GM12878 (cell line): ENCODE measurements at regions of chr1 and their contacts with region 1.

Region 1: GRCh38 chr1:174743654-174744561 is 255.8 kb upstream of the CACYBP start:
- DNase-seq: no peak
- ATAC-seq: peak; percentile 39
- H3K4me3 ChIP-seq: no peak overlapping the region
- H3K27ac ChIP-seq: no peak overlapping the region
- H3K4me1 ChIP-seq: peaks cover 9% of the 10 kb centered on the region; the same call in 1 of the 2 replicates
- H3K27me3 ChIP-seq: no peaks in the 10 kb centered on the region
- CTCF ChIP-seq: peak; percentile 36 to 63 (median 41); a peak in 5 of 6 replicates
- EP300 ChIP-seq: no peak
- POLR2A ChIP-seq: no peak
- RAD21 ChIP-seq: peak; percentile 80

Region 2: DNA sequence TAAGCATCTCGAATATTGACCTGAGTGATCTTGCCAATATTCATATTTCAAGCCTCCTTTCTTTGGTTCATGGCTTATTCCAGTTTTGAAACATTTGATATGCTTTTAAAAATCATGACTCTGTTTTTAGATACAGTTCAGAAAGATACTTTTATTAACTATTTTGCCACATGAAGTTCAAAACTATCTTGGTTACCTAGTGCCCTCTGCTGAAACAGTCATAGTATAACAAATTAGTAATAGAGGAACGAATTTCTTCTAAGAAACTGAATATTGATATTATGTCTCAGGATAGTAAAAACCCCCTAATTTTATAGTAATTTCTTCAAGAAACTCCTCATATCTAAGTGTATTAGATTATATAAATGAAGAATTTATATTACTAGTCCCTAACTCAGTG is 669.2 kb before region 1 on chr1:
- CTCF ChIA-PET with region 1: no interaction called
- POLR2A ChIA-PET with region 1: no interaction called
- RAD21 ChIA-PET with region 1: no interaction called
- SMC1A ChIA-PET with region 1: no interaction called
- in situ Hi-C with region 1: loop called (anchors 25 kb)
- intact Hi-C with region 1: no loop called
- DNase-seq: no peak
- ATAC-seq: no peak
- H3K4me3 ChIP-seq: no peak overlapping the region
- H3K27ac ChIP-seq: no peak overlapping the region
- H3K4me1 ChIP-seq: no peaks in the 10 kb centered on the region
- H3K27me3 ChIP-seq: no peaks in the 10 kb centered on the region
- CTCF ChIP-seq: peak in 1 of 3 experiments; percentile 11; a peak in 3 of 6 replicates
- EP300 ChIP-seq: no peak
- POLR2A ChIP-seq: no peak
- RAD21 ChIP-seq: peak; percentile 60

Region 3: DNA sequence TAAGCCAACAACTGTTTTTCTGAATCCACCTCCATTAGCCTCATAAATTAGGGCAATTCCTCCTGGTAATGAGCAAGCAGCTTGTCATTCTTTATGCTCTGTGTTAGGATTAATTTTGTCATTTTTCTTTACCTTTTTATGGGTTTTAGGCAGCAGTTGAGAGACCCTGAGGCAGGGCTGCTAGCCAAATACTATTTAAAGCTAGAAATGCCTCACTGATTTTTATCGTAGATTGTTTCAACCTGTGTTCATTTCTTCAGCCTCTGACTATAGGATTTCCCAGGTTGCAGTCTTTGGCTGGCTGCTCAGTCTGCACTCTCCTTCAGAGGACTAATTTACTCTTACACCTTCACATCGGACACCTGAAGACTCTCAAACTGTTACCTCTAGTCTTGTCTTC is 646.5 kb before region 1 on chr1:
- CTCF ChIA-PET with region 1: no interaction called
- POLR2A ChIA-PET with region 1: no interaction called
- RAD21 ChIA-PET with region 1: no interaction called
- SMC1A ChIA-PET with region 1: no interaction called
- in situ Hi-C with region 1: loop called (anchors 25 kb)
- intact Hi-C with region 1: loop called (anchors 10 kb)
- DNase-seq: no peak
- ATAC-seq: no peak
- H3K4me3 ChIP-seq: no peak overlapping the region
- H3K27ac ChIP-seq: no peak overlapping the region
- H3K4me1 ChIP-seq: no peaks in the 10 kb centered on the region
- H3K27me3 ChIP-seq: no peaks in the 10 kb centered on the region; a peak in 1 of 4 replicates
- CTCF ChIP-seq: no peak
- EP300 ChIP-seq: no peak
- POLR2A ChIP-seq: no peak
- RAD21 ChIP-seq: no peak

Region 4: GRCh38 chr1:174159252-174160108 is 584.4 kb before region 1 on chr1 and contains the start of gene RABGAP1L:
- CTCF ChIA-PET with region 1: no interaction called
- POLR2A ChIA-PET with region 1: no interaction called
- RAD21 ChIA-PET with region 1: no interaction called
- SMC1A ChIA-PET with region 1: no interaction called
- in situ Hi-C with region 1: no loop called
- intact Hi-C with region 1: loop called (anchors 10 kb)
- DNase-seq: peak; percentile 55
- ATAC-seq: peak; percentile 84
- H3K4me3 ChIP-seq: peak within 1 kb of the TSS; percentile 91
- H3K27ac ChIP-seq: peak within 1 kb of the TSS; percentile 93
- H3K4me1 ChIP-seq: peaks cover 31% of the 10 kb centered on the region
- H3K27me3 ChIP-seq: no peaks in the 10 kb centered on the region; a peak in 1 of 4 replicates
- CTCF ChIP-seq: no peak
- EP300 ChIP-seq: no peak
- POLR2A ChIP-seq: peak; percentile 96
- RAD21 ChIP-seq: 0 out of 2 replicates have a peak, but pooled peaks have one; percentile 6
- polyA plus RNA-seq, gene RABGAP1L: 92.3 to 130 TPM

Region 5: GRCh38 chr1:174262349-174263241 is 481.3 kb before region 1 on chr1:
- CTCF ChIA-PET with region 1: interaction called, 91 read pairs
- POLR2A ChIA-PET with region 1: no interaction called
- RAD21 ChIA-PET with region 1: interaction called, 48 read pairs
- SMC1A ChIA-PET with region 1: interaction called, 52 read pairs
- in situ Hi-C with region 1: loop called (anchors 5 kb)
- intact Hi-C with region 1: loop called (anchors 1 kb)
- DNase-seq: peak; percentile 11
- ATAC-seq: peak; percentile 81
- H3K4me3 ChIP-seq: no peak overlapping the region
- H3K27ac ChIP-seq: no peak overlapping the region
- H3K4me1 ChIP-seq: no peaks in the 10 kb centered on the region
- H3K27me3 ChIP-seq: no peaks in the 10 kb centered on the region
- CTCF ChIP-seq: peak; percentile 67 to 81 (median 77); a peak in 5 of 6 replicates
- EP300 ChIP-seq: no peak
- POLR2A ChIP-seq: no peak
- RAD21 ChIP-seq: peak; percentile 91

Region 6: GRCh38 chr1:174874331-174875053 is 130.6 kb after region 1 on chr1:
- CTCF ChIA-PET with region 1: no interaction called
- POLR2A ChIA-PET with region 1: no interaction called
- RAD21 ChIA-PET with region 1: no interaction called
- SMC1A ChIA-PET with region 1: no interaction called
- in situ Hi-C with region 1: no loop called
- intact Hi-C with region 1: no loop called
- DNase-seq: peak; percentile 40
- ATAC-seq: peak; percentile 83
- H3K4me3 ChIP-seq: peak overlapping the region; percentile 54; the same call in 1 of the 2 replicates
- H3K27ac ChIP-seq: peak overlapping the region; percentile 47
- H3K4me1 ChIP-seq: peaks cover 25% of the 10 kb centered on the region
- H3K27me3 ChIP-seq: no peaks in the 10 kb centered on the region
- CTCF ChIP-seq: no peak
- EP300 ChIP-seq: no peak
- POLR2A ChIP-seq: no peak
- RAD21 ChIP-seq: no peak

Region 7: DNA sequence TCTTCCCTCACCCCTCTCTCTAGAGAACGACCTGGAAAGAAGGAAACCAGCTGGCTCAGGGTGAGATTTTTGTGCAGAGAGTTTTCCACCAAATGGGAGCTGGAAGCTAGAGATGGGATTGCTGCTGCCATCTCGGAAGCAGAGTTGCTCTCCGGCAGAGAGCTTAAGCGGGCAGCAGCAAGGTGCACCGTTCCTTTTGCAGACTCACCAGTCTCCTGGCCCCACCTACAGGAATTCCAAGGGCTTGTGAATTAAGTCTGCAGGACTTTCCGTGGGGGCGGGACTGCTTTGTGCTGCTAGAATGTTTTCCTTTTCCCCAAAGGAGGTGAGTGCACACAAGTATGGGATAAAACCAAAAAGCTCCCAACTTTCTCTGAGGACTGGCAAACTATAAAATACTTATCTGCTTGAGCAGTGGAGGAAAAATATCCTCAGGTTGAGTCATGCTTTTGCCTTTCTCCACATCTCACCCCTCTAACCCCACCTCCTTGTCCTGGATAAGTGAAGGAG is 477.8 kb after region 1 on chr1:
- CTCF ChIA-PET with region 1: no interaction called
- POLR2A ChIA-PET with region 1: no interaction called
- RAD21 ChIA-PET with region 1: no interaction called
- SMC1A ChIA-PET with region 1: no interaction called
- in situ Hi-C with region 1: no loop called
- intact Hi-C with region 1: no loop called
- DNase-seq: no peak
- ATAC-seq: no peak
- H3K4me3 ChIP-seq: no peak overlapping the region
- H3K27ac ChIP-seq: no peak overlapping the region
- H3K4me1 ChIP-seq: peaks cover 23% of the 10 kb centered on the region
- H3K27me3 ChIP-seq: no peaks in the 10 kb centered on the region
- CTCF ChIP-seq: no peak
- EP300 ChIP-seq: no peak
- POLR2A ChIP-seq: no peak
- RAD21 ChIP-seq: no peak